ENCODE measurements at regions of chr1 and their contacts with region 1.

Region 1: GRCh38 chr1:50917138-50918137 is 42.6 kb downstream of the FAF1 start:
- DNase-seq: no peak
- H3K4me3 Mint-ChIP-seq: no peak overlapping the region
- H3K27ac Mint-ChIP-seq: peak overlapping the region; percentile 10
- H3K4me1 Mint-ChIP-seq: peaks cover 19% of the 10 kb centered on the region
- H3K27me3 Mint-ChIP-seq: no peaks in the 10 kb centered on the region
- CTCF ChIP-seq: no peak

Region 2: DNA sequence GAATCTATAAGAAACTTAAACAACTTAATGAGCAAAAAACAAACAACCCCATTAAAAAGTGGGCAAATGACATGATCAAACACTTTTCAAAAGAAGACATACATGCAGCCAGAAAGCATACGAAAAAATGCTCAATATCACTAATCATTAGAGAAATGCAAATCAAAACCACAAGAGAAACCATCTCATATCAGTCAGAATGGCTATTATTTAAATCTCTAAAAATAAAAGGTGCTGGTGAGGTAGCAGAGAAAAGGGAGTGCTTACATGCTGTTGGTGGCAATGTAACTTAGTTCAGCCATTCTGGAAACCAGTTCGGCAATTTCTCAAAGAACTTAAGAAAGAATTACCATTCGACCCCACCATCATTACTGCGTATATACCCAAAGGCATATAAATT is 105.1 kb before region 1 on chr1:
- CTCF ChIA-PET with region 1: no interaction called
- intact Hi-C with region 1: no loop called
- DNase-seq: no peak
- H3K4me3 Mint-ChIP-seq: no peak overlapping the region
- H3K27ac Mint-ChIP-seq: no peak overlapping the region
- H3K4me1 Mint-ChIP-seq: peaks cover 11% of the 10 kb centered on the region
- H3K27me3 Mint-ChIP-seq: no peaks in the 10 kb centered on the region
- CTCF ChIP-seq: no peak

Region 3: DNA sequence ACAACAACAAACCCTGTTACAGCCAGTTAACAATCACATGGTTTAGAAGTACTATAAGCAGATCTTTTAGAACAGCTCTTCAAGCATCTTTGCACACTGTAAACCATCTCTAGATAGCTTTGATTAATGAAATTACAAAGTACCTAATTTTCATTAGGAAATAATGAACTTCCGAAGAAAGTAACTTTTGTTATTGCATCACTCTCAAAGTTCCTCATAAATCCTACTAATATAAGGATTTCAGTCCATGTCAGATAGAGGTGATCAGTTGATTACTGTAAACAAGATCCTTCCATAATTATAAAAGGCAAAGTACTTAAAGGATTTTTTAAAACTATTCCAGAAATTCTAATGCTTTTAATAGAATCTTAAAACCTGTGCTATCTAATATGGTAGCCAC is 15.6 kb before region 1 on chr1:
- CTCF ChIA-PET with region 1: no interaction called
- intact Hi-C with region 1: loop called (anchors 2 kb)
- DNase-seq: no peak
- H3K4me3 Mint-ChIP-seq: no peak overlapping the region
- H3K27ac Mint-ChIP-seq: no peak overlapping the region
- H3K4me1 Mint-ChIP-seq: no peaks in the 10 kb centered on the region
- H3K27me3 Mint-ChIP-seq: no peaks in the 10 kb centered on the region
- CTCF ChIP-seq: no peak